ENCODE measurements at regions of chr2 and their contacts with region 1.

Region 1: DNA sequence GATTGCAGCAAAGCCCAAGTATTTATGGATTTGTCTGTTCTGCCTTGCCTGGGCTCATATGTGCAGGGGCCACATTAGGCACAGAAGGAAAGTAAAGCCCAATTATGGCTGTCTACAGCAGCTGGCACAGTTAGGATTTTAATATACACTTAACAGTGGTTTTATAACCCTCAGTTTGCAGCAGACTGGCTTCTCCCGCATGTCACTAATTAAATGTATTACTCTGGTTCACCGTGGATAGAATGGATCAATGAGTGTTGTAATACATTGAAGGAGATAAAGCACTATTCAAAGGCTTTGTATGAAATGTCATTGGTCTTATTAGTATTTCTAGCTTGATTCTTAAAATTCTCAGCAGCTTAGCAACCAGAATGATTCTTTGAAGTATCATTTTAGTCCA is 320.2 kb downstream of the KCNS3 start:
- DNase-seq: no peak
- CTCF ChIP-seq: no peak

Region 2: GRCh38 chr2:18209919-18210639 is 11.4 kb after region 1 on chr2:
- CTCF ChIA-PET with region 1: interaction called, 13 read pairs
- POLR2A ChIA-PET with region 1: no interaction called
- DNase-seq: no peak
- CTCF ChIP-seq: no peak

Measured in GM10248 (cell line).